Sigmoid colon (tissue), 7 donors: ENCODE measurements at regions of chr1 and their contacts with region 1.

Region 1: GRCh38 chr1:7667625-7668218 is 103.4 kb upstream of the VAMP3 start:
- DNase-seq: peak; percentile 94
- H3K4me3 ChIP-seq: no peak overlapping the region
- H3K27ac ChIP-seq: peak overlapping the region in 2 of 4 donors; percentile 30 to 56
- H3K4me1 ChIP-seq: peaks cover 0 to 18% (median 13%) of the 10 kb centered on the region in 4 donors
- H3K27me3 ChIP-seq: peaks cover 0 to 4% (median 0%) of the 10 kb centered on the region in 3 donors
- CTCF ChIP-seq: peak; percentile 99 to 100 (median 100)
- EP300 ChIP-seq: no peak
- POLR2A ChIP-seq: no peak

Region 2: DNA sequence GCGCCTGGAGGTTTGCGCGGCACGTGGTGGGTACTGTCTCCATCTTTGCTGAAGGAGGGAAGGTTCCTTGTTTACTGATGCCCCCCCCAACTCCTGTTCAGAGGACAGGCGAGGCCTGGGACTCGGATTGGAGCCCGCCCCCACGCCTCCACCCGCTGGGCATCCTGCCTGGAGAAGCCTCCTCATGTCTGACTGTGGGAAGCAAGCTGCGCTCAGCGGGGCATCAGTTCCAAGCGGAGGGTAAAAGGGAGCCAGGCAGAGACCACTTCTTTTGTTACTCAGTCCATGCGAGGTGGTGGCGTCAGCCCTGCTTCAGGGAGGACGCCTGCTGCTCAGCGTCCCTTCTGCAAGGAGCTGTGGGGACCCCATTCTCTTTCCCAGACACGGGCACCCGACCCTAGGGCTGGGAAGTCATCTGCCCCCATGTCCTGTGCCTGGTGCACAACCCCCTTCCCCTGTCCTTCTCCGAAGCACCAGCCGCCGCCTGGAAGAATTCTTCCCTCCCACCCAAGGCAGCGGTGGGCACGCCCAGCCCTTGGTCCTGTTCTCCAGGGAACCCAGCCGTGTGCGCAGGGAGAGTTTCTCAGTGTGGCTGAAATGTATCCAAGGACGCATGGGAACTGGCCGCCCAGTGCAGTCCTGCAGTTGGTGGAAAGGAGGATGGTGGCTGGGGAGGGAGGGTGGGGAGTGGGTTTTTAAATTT is 468.5 kb before region 1 on chr1:
- intact Hi-C with region 1: no loop called
- DNase-seq: no peak
- H3K4me3 ChIP-seq: no peak overlapping the region
- H3K27ac ChIP-seq: no peak overlapping the region
- H3K4me1 ChIP-seq: no peaks in the 10 kb centered on the region
- H3K27me3 ChIP-seq: no peaks in the 10 kb centered on the region
- CTCF ChIP-seq: no peak
- EP300 ChIP-seq: no peak
- POLR2A ChIP-seq: no peak

Region 3: GRCh38 chr1:7902478-7903085 is 234.9 kb after region 1 on chr1:
- intact Hi-C with region 1: loop called (anchors 2 kb)
- DNase-seq: peak; percentile 82
- H3K4me3 ChIP-seq: peak overlapping the region in 2 of 4 donors; percentile 20 to 21
- H3K27ac ChIP-seq: no peak overlapping the region
- H3K4me1 ChIP-seq: peaks cover 0 to 3% (median 0%) of the 10 kb centered on the region in 4 donors
- H3K27me3 ChIP-seq: no peaks in the 10 kb centered on the region
- CTCF ChIP-seq: peak; percentile 44 to 74 (median 56)
- EP300 ChIP-seq: no peak
- POLR2A ChIP-seq: no peak